Calu3 (cell line): ENCODE measurements at regions of chr1 and their contacts with region 1.

Region 1: GRCh38 chr1:100277866-100278265 is 11.8 kb downstream of the RTCA start:
- DNase-seq: peak; percentile 22
- H3K4me3 Mint-ChIP-seq: no peak overlapping the region
- H3K27ac Mint-ChIP-seq: no peak overlapping the region
- H3K4me1 Mint-ChIP-seq: no peaks in the 10 kb centered on the region
- H3K27me3 Mint-ChIP-seq: no peaks in the 10 kb centered on the region
- CTCF ChIP-seq: no peak

Region 2: GRCh38 chr1:100229681-100230443 is 48.0 kb before region 1 on chr1:
- CTCF ChIA-PET with region 1: no interaction called
- intact Hi-C with region 1: no loop called
- DNase-seq: no peak
- H3K4me3 Mint-ChIP-seq: no peak overlapping the region
- H3K27ac Mint-ChIP-seq: no peak overlapping the region
- H3K4me1 Mint-ChIP-seq: peaks cover 13% of the 10 kb centered on the region
- H3K27me3 Mint-ChIP-seq: no peaks in the 10 kb centered on the region
- CTCF ChIP-seq: no peak

Region 3: GRCh38 chr1:100308777-100309176 is 30.9 kb after region 1 on chr1:
- CTCF ChIA-PET with region 1: no interaction called
- intact Hi-C with region 1: no loop called
- DNase-seq: no peak
- H3K4me3 Mint-ChIP-seq: no peak overlapping the region
- H3K27ac Mint-ChIP-seq: no peak overlapping the region
- H3K4me1 Mint-ChIP-seq: peaks cover 13% of the 10 kb centered on the region
- H3K27me3 Mint-ChIP-seq: no peaks in the 10 kb centered on the region
- CTCF ChIP-seq: no peak

Region 4: DNA sequence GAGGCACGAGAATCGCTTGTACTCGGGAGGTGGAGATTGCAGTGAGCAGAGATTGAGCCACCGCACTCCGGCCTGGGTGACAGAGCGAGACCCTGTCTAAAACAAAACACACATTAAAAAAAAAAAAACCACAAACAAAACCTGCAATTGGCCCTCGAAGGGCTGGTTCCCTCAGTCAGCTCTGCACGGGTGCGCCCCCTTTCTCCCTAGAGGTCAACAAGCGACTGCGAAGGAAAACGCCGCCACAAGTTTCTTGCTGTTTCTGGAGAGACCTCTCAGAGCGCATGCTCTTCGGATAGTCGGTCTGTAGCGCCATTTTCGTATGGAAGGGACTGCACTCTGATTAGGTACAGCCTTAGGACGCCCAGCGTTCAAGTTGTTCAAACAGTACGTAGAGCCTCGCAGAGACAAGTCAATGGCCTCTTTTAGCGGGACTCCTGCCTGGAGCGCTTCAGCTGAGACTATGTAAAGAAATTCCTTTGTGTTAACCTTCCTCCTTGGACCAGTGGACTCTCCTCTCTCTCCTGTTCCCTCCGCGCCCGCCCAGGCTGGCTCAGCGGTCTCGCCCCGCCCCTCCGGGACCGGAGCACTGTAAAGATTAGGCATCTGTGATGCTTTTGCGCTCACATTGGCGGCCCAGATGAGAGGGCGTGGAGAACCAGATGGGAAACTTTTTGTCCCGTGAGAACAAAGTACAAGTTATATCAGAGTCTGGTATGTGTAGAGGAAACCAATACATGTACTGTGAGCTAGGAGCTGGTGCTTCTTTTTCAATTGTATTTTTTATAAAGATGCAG is 73.4 kb after region 1 on chr1:
- CTCF ChIA-PET with region 1: no interaction called
- intact Hi-C with region 1: loop called (anchors 5 kb)
- DNase-seq: peak; percentile 84
- H3K4me3 Mint-ChIP-seq: peak overlapping the region; percentile 91
- H3K27ac Mint-ChIP-seq: peak overlapping the region; percentile 92
- H3K4me1 Mint-ChIP-seq: peaks cover 24% of the 10 kb centered on the region
- H3K27me3 Mint-ChIP-seq: no peaks in the 10 kb centered on the region
- CTCF ChIP-seq: peak; percentile 34